Activated CD4-positive, alpha-beta memory T cell treated with anti-CD3 and anti-CD28 coated beads for 36 hours (primary cell): ENCODE measurements at regions of chr1 and their contacts with region 1.

Region 1: DNA sequence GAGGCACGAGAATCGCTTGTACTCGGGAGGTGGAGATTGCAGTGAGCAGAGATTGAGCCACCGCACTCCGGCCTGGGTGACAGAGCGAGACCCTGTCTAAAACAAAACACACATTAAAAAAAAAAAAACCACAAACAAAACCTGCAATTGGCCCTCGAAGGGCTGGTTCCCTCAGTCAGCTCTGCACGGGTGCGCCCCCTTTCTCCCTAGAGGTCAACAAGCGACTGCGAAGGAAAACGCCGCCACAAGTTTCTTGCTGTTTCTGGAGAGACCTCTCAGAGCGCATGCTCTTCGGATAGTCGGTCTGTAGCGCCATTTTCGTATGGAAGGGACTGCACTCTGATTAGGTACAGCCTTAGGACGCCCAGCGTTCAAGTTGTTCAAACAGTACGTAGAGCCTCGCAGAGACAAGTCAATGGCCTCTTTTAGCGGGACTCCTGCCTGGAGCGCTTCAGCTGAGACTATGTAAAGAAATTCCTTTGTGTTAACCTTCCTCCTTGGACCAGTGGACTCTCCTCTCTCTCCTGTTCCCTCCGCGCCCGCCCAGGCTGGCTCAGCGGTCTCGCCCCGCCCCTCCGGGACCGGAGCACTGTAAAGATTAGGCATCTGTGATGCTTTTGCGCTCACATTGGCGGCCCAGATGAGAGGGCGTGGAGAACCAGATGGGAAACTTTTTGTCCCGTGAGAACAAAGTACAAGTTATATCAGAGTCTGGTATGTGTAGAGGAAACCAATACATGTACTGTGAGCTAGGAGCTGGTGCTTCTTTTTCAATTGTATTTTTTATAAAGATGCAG is 1.0 kb upstream of the CDC14A start:
- DNase-seq: peak; percentile 94
- H3K4me3 Mint-ChIP-seq: peak overlapping the region; percentile 98
- H3K27ac Mint-ChIP-seq: peak overlapping the region; percentile 97
- H3K4me1 Mint-ChIP-seq: peaks cover 30% of the 10 kb centered on the region
- H3K27me3 Mint-ChIP-seq: no peaks in the 10 kb centered on the region

Region 2: GRCh38 chr1:98546319-98546718 is 1805.0 kb before region 1 on chr1:
- CTCF ChIA-PET with region 1: no interaction called
- POLR2A ChIA-PET with region 1: no interaction called
- intact Hi-C with region 1: no loop called
- DNase-seq: no peak
- H3K4me3 Mint-ChIP-seq: no peak overlapping the region
- H3K27ac Mint-ChIP-seq: no peak overlapping the region
- H3K4me1 Mint-ChIP-seq: no peaks in the 10 kb centered on the region
- H3K27me3 Mint-ChIP-seq: no peaks in the 10 kb centered on the region

Region 3: GRCh38 chr1:99969729-99970621 is 381.3 kb before region 1 on chr1 and contains the start of gene SLC35A3:
- CTCF ChIA-PET with region 1: no interaction called
- POLR2A ChIA-PET with region 1: no interaction called
- intact Hi-C with region 1: loop called (anchors 5 kb)
- DNase-seq: peak; percentile 88
- H3K4me3 Mint-ChIP-seq: peak within 1 kb of the TSS; percentile 100
- H3K27ac Mint-ChIP-seq: peak within 1 kb of the TSS; percentile 88
- H3K4me1 Mint-ChIP-seq: peaks cover 18% of the 10 kb centered on the region
- H3K27me3 Mint-ChIP-seq: no peaks in the 10 kb centered on the region
- total RNA-seq, gene SLC35A3: 16.5 to 18.3 TPM

Region 4: GRCh38 chr1:100249537-100250257 is 101.6 kb before region 1 on chr1 and contains the start of gene DBT:
- CTCF ChIA-PET with region 1: no interaction called
- POLR2A ChIA-PET with region 1: interaction called, 14 read pairs
- intact Hi-C with region 1: loop called (anchors 1 kb)
- DNase-seq: peak; percentile 96
- H3K4me3 Mint-ChIP-seq: no peak within 1 kb of the TSS
- H3K27ac Mint-ChIP-seq: no peak within 1 kb of the TSS
- H3K4me1 Mint-ChIP-seq: peaks cover 21% of the 10 kb centered on the region
- H3K27me3 Mint-ChIP-seq: no peaks in the 10 kb centered on the region
- total RNA-seq, gene DBT: 11.4 to 11.7 TPM

Region 5: DNA sequence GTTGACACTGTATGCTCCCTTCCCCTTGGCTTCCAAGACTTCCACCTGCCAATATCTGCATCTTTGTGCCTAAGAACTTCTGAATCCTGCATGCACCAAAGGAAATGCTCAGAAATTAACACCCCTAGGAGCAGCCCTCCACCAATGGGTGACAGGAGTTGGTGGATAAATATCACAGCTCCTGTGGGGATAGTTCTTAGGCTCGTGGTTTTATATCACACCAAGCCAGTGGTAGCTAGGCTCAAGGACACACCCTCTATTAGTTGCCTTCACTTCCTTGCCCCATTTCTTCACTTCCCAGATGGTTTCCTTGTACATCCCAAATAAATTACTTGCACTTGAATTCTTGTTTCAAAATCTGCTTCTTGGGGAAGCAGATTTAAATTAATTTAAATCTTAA is 15.9 kb before region 1 on chr1:
- CTCF ChIA-PET with region 1: no interaction called
- POLR2A ChIA-PET with region 1: no interaction called
- intact Hi-C with region 1: no loop called
- DNase-seq: no peak
- H3K4me3 Mint-ChIP-seq: no peak overlapping the region
- H3K27ac Mint-ChIP-seq: no peak overlapping the region
- H3K4me1 Mint-ChIP-seq: no peaks in the 10 kb centered on the region
- H3K27me3 Mint-ChIP-seq: no peaks in the 10 kb centered on the region

Region 6: GRCh38 chr1:100364697-100365096 is 13.4 kb after region 1 on chr1:
- CTCF ChIA-PET with region 1: interaction called, 18 read pairs
- POLR2A ChIA-PET with region 1: interaction called, 13 read pairs
- intact Hi-C with region 1: no loop called
- DNase-seq: no peak
- H3K4me3 Mint-ChIP-seq: peak overlapping the region; percentile 45
- H3K27ac Mint-ChIP-seq: peak overlapping the region; percentile 68
- H3K4me1 Mint-ChIP-seq: peaks cover 77% of the 10 kb centered on the region
- H3K27me3 Mint-ChIP-seq: no peaks in the 10 kb centered on the region

Region 7: DNA sequence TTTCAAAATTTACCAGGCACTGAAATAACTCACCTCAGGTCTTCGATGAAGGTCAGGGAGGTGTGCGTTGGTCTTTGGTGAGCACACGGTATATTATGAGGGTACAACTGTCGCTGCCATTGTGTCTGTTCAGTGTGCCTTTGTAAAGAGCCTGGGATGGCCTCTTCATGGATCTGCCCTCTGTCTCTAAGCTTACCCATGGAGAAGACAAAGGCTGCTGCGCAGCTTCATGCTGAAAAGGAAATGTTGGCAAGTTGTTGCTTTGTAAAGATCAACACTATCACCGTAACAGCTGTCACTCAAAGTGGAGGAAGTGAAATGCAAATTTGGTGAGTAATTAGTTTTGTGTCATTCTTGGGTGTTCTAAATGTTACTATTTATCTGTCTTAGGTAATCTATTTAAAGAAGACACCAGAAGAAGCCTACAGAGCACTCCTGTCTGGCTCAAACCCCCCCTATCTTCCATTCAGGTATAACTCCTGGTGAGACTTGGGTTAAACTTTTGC is 72.6 kb after region 1 on chr1:
- CTCF ChIA-PET with region 1: interaction called, 15 read pairs
- POLR2A ChIA-PET with region 1: interaction called, 24 read pairs
- intact Hi-C with region 1: loop called (anchors 1 kb)
- DNase-seq: peak; percentile 33
- H3K4me3 Mint-ChIP-seq: peak overlapping the region; percentile 57
- H3K27ac Mint-ChIP-seq: peak overlapping the region; percentile 76
- H3K4me1 Mint-ChIP-seq: peaks cover 72% of the 10 kb centered on the region
- H3K27me3 Mint-ChIP-seq: no peaks in the 10 kb centered on the region

Region 8: DNA sequence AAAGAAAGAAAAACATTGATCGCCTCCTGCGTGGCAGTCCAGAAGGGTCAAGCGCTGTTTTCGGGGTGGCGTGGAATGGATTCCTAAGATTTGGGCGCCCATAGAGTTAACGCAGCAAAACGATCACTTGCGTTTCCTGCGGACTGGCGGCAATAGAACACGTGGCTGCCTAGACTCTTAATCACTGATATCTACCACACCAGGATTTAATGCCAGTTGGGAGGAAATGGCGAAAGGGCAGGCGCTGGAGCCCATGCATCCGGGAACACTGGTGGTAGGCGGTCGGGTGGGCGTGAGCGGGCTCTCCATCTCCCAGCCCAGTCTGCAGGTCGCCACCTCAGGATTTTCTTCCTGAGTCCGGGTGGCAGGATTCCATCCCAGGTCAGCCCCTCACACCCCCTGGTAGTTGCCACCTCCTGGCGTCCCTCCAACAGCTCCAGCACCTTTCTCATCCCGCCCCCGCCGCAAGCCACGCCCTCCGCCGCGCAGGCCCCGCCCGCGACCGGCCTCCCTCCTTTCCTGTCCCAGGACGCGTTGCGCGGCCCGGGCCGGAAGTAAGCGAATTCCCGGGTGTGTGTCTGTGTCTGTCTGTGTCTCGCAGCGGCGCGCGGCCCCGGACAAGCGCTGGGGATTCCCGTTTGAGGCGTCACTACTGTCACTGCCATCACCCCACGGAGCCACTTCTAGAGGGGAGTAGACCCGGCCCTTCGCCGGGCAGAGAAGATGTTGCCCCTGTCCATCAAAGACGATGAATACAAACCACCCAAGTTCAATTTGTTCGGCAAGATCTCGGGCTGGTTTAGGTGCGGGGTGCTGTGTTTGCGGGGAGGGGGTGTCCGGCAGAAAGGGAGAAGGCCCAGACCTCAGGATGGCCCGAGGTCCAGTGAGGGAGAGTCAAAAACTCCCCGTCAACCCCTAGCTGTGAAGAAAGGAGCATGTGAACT is 544.5 kb after region 1 on chr1 and contains the start of gene SLC30A7:
- CTCF ChIA-PET with region 1: no interaction called
- POLR2A ChIA-PET with region 1: interaction called, 3 read pairs
- intact Hi-C with region 1: loop called (anchors 2 kb)
- DNase-seq: peak; percentile 98
- H3K4me3 Mint-ChIP-seq: peak within 1 kb of the TSS; percentile 99
- H3K27ac Mint-ChIP-seq: peak within 1 kb of the TSS; percentile 100
- H3K4me1 Mint-ChIP-seq: peaks cover 40% of the 10 kb centered on the region
- H3K27me3 Mint-ChIP-seq: no peaks in the 10 kb centered on the region
- total RNA-seq, gene SLC30A7: 40.0 to 43.4 TPM